Activated B cell treated with CpG ODN at 0.5 μM for 24 hours (primary cell): ENCODE measurements at regions of chr12 and their contacts with region 1.

Region 1: DNA sequence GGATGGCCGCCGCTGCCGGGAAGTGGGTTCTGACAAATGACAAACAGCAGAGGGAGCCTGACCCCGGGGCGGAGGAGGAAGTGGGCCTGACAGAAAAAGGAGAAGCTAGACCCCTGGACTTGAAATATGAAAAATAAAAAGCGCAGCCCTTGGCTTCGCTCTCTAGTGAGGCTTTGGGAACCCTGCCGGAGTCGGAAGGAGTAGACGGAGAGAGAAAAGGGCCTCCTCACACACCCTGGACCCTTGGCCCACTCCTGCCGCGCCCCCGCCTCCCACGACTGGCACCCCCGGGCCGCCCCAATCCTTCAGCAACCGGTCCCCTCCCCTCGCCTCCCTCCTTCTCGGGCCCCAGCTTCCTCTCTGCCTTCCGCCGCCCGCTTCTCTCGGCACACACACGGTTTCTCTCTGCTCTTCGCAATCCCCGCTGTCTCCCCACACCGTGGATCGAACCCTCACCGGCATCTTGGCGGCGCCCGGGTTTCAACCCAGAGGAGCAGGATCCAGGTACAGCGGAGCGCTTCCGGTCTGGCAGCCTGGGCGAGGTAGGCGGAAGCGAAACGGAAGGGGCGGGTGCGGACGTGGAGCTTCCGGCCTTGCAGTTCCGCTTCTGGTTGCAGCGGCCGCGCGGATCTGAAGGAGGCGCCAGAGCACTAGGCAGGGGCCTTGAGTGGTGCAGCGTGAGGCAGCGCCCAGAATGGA is at the start of gene ARPC3:
- DNase-seq: peak; percentile 92
- ATAC-seq: peak; percentile 92
- H3K4me3 Mint-ChIP-seq: peak within 1 kb of the TSS; percentile 100
- H3K27ac Mint-ChIP-seq: peak within 1 kb of the TSS; percentile 100
- H3K4me1 Mint-ChIP-seq: peaks cover 48% of the 10 kb centered on the region
- H3K27me3 Mint-ChIP-seq: no peaks in the 10 kb centered on the region
- CTCF ChIP-seq: no peak
- total RNA-seq, gene ARPC3: 435 and 459 TPM in 2 replicates

Region 2: GRCh38 chr12:110501752-110502738 is 52.1 kb after region 1 on chr12 and contains the starts of genes RAD9B and VPS29:
- CTCF ChIA-PET with region 1: interaction called, 16 read pairs
- POLR2A ChIA-PET with region 1: interaction called, 25 read pairs
- intact Hi-C with region 1: loop called (anchors 1 kb)
- DNase-seq: peak; percentile 95
- ATAC-seq: peak; percentile 95
- H3K4me3 Mint-ChIP-seq: peak within 1 kb of the TSS; percentile 99
- H3K27ac Mint-ChIP-seq: peak within 1 kb of the TSS; percentile 96
- H3K4me1 Mint-ChIP-seq: peaks cover 36% of the 10 kb centered on the region
- H3K27me3 Mint-ChIP-seq: no peaks in the 10 kb centered on the region
- CTCF ChIP-seq: no peak
- total RNA-seq, gene RAD9B: 1.2 and 1.3 TPM in 2 replicates
- total RNA-seq, gene VPS29: 99.6 and 117 TPM in 2 replicates

Region 3: DNA sequence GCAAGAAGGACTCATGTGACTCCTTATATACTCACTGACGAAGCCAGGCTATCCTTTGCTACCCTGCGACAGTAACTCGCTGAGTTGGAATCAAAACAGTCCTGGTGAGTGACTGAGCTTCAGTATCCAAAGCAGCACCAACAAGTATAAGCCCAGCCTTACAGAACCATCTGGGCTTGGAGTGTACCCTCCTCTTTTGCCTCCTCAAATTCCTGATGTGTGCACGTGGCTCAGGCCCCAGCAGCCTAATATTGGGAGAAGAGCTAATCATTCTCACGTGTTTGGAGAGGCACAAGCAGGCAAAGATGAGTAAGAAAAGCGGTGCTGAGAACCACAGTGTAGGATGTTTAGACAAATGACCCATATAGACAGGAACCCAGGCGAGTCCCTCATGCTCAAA is 98.7 kb after region 1 on chr12:
- CTCF ChIA-PET with region 1: interaction called, 13 read pairs
- POLR2A ChIA-PET with region 1: interaction called, 9 read pairs
- intact Hi-C with region 1: loop called (anchors 1 kb)
- DNase-seq: no peak
- ATAC-seq: no peak
- H3K4me3 Mint-ChIP-seq: no peak overlapping the region
- H3K27ac Mint-ChIP-seq: peak overlapping the region; percentile 21
- H3K4me1 Mint-ChIP-seq: peaks cover 28% of the 10 kb centered on the region
- H3K27me3 Mint-ChIP-seq: no peaks in the 10 kb centered on the region
- CTCF ChIP-seq: no peak

Region 4: DNA sequence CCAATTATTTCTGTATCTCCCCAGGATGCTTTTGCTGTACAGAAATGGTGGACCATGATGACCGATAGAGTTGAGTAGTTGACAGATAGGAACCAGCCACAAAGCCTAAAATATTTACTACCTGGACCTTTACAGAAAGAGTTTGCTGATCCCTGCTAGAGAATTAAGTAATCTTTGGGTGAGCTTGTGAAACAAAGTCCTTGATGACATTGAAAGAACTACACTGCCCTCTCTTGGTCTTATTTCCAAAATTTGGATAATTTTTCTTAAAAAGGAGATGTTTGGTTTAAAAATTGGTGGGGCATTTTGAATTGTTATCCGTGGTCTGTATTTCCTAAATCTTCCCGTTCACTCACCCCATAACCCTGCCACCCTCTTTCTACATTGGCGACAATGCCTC is 150.3 kb after region 1 on chr12:
- CTCF ChIA-PET with region 1: interaction called, 189 read pairs
- POLR2A ChIA-PET with region 1: interaction called, 90 read pairs
- intact Hi-C with region 1: loop called (anchors 1 kb)
- DNase-seq: no peak
- ATAC-seq: peak; percentile 54
- H3K4me3 Mint-ChIP-seq: no peak overlapping the region
- H3K27ac Mint-ChIP-seq: peak overlapping the region; percentile 69
- H3K4me1 Mint-ChIP-seq: peaks cover 44% of the 10 kb centered on the region
- H3K27me3 Mint-ChIP-seq: no peaks in the 10 kb centered on the region
- CTCF ChIP-seq: no peak

Region 5: DNA sequence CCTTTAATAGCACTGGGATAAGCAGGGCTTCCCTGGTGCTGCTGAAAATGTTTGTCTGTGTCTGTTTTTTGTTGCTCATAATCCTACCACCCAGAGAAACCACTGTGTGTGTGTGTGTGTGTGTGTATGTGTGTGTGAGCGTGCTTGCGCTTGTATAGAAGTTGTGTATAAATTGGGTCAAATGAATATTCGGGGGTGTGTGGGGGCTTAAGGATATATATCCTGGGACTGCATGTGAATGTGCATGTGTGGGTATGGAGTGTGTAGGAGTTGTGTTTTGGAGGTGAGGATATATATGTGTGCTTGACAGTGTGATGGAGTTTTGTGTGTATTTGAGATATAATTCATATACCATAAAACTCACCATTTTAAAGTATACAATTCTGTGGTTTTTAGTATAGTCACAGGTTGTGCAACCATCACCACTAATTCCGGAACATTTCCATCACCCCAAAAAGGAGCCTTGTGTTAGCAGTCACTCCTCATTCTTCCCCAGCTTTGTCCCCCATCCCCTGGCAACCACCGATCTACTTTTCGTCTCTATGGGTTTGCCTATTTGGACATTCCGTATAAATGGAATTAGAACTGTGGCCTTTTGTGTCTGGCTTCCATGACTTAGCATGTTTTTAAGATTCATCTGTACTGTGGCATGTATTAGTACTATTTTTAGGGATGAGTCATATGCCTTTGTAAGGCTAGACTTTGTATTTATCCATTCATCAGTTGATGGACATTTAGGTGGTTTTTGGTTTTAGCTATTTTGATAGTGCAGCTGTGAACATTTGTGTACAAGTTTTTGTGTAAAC is 189.6 kb after region 1 on chr12:
- CTCF ChIA-PET with region 1: no interaction called
- POLR2A ChIA-PET with region 1: no interaction called
- intact Hi-C with region 1: no loop called
- DNase-seq: no peak
- ATAC-seq: peak; percentile 27
- H3K4me3 Mint-ChIP-seq: peak overlapping the region; percentile 36
- H3K27ac Mint-ChIP-seq: peak overlapping the region; percentile 89
- H3K4me1 Mint-ChIP-seq: peaks cover 98% of the 10 kb centered on the region
- H3K27me3 Mint-ChIP-seq: no peaks in the 10 kb centered on the region
- CTCF ChIP-seq: no peak

Region 6: GRCh38 chr12:110698171-110698902 is 248.4 kb after region 1 on chr12:
- CTCF ChIA-PET with region 1: interaction called, 4 read pairs
- POLR2A ChIA-PET with region 1: interaction called, 5 read pairs
- intact Hi-C with region 1: loop called (anchors 1 kb)
- DNase-seq: peak; percentile 60
- ATAC-seq: peak; percentile 100
- H3K4me3 Mint-ChIP-seq: peak overlapping the region; percentile 61
- H3K27ac Mint-ChIP-seq: peak overlapping the region; percentile 91
- H3K4me1 Mint-ChIP-seq: peaks cover 38% of the 10 kb centered on the region
- H3K27me3 Mint-ChIP-seq: no peaks in the 10 kb centered on the region
- CTCF ChIP-seq: peak; percentile 17

Region 7: GRCh38 chr12:110888256-110888991 is 438.5 kb after region 1 on chr12:
- CTCF ChIA-PET with region 1: interaction called, 22 read pairs
- POLR2A ChIA-PET with region 1: interaction called, 6 read pairs
- intact Hi-C with region 1: loop called (anchors 1 kb)
- DNase-seq: no peak
- ATAC-seq: no peak
- H3K4me3 Mint-ChIP-seq: peak overlapping the region; percentile 92
- H3K27ac Mint-ChIP-seq: peak overlapping the region; percentile 84
- H3K4me1 Mint-ChIP-seq: peaks cover 4% of the 10 kb centered on the region
- H3K27me3 Mint-ChIP-seq: no peaks in the 10 kb centered on the region
- CTCF ChIP-seq: no peak